GM12878 (cell line): ENCODE measurements at regions of chr6 and their contacts with region 1.

Region 1: DNA sequence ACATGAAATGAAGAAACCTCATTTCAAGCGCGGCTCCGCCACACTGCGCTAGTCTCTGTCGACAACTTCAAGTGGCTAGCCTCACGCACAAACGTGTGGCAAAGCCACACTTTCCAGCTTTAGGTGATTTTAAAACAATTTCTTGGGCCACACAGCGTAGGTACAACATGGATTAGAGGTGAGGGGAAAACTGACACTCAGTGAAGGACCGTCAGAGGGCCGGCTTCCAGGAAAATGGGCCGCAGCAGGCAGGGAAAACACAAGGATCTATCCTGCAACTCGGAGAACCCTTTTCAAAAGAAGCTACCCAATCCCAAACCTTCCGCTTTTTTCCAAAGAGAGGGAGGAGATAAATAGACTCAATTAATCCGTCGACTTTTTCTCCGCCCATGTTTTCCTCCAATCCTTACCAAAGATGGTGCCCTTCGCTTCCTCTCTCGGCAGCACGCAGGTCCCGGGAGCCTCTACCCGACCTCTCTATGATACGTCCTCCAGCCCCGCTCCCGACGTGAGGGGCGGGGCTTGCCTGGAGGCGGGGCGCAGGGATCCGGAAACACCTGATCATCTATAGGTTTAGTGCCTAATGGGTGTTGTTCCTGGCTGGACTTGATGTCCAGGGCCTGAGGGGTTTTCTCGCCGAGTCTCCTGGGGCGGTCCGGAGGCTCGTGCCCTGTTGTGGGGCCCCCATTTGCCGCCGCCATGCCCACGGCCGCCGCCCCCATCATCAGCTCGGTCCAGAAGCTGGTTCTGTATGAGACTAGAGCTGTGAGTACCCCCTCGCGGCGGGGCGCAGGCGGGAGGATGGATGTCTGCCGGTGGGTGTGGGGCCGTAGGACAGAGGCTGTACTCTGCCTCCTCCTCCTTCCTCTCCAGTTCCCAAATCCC is at the starts of genes AK9 and FIG4:
- DNase-seq: peak; percentile 61
- ATAC-seq: peak; percentile 97
- H3K4me3 ChIP-seq: peak within 1 kb of the TSS; percentile 91
- H3K27ac ChIP-seq: peak within 1 kb of the TSS; percentile 67
- H3K4me1 ChIP-seq: peaks cover 5% of the 10 kb centered on the region
- H3K27me3 ChIP-seq: no peaks in the 10 kb centered on the region
- CTCF ChIP-seq: peak in 2 of 3 experiments; percentile 16 to 29; a peak in 3 of 6 replicates
- EP300 ChIP-seq: no peak
- POLR2A ChIP-seq: peak; percentile 67
- RAD21 ChIP-seq: peak; percentile 17; the same call in 1 of the 2 replicates
- polyA plus RNA-seq, gene AK9: 4.0 to 5.8 TPM
- polyA plus RNA-seq, gene FIG4: 3.8 to 4.7 TPM

Region 2: GRCh38 chr6:109491207-109491938 is 199.6 kb before region 1 on chr6:
- CTCF ChIA-PET with region 1: no interaction called
- POLR2A ChIA-PET with region 1: interaction called, 10 read pairs
- RAD21 ChIA-PET with region 1: interaction called, 5 read pairs
- SMC1A ChIA-PET with region 1: interaction called, 5 read pairs
- in situ Hi-C with region 1: no loop called
- intact Hi-C with region 1: no loop called
- DNase-seq: no peak
- ATAC-seq: peak; percentile 89
- H3K4me3 ChIP-seq: no peak overlapping the region
- H3K27ac ChIP-seq: no peak overlapping the region
- H3K4me1 ChIP-seq: no peaks in the 10 kb centered on the region
- H3K27me3 ChIP-seq: no peaks in the 10 kb centered on the region; a peak in 1 of 4 replicates
- CTCF ChIP-seq: no peak
- EP300 ChIP-seq: no peak
- POLR2A ChIP-seq: no peak
- RAD21 ChIP-seq: no peak

Region 3: DNA sequence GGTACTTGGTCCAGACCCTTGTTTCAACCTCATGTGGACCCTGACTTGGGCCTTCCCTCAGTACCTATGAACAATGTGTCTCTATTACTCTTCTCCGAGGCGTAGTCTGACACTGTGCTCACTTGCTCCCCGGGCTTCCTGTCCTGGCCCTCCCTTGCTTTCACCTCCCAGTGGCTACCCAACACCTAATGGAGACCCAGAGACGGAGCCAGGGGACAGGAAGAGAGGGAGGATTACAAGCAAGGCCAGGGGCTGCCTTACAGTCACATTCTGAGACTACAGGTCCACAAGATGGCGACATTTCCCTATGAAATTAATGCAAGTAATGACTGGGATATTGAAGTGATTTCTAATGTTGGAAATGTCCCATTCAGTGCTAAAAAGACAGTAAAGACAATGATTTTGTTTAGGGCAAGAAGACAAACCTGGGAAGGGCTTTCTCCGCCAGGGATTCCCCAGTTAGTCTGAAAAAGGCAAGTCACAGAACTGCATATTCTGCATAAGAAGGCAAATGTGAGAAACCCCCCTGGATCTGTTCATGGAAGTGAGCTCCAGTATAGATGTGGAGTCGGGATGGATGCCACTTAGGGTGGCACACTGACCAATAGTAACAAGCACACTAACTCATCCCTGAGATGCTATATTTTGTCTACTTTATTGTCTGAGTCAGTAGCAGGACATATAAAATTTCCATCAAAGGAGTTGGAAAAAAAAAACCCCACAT is 163.9 kb before region 1 on chr6:
- CTCF ChIA-PET with region 1: interaction called, 5 read pairs
- POLR2A ChIA-PET with region 1: no interaction called
- RAD21 ChIA-PET with region 1: no interaction called
- SMC1A ChIA-PET with region 1: interaction called, 5 read pairs
- in situ Hi-C with region 1: loop called (anchors 10 kb)
- intact Hi-C with region 1: loop called (anchors 2 kb)
- DNase-seq: peak; percentile 28
- ATAC-seq: peak; percentile 97
- H3K4me3 ChIP-seq: no peak overlapping the region
- H3K27ac ChIP-seq: no peak overlapping the region
- H3K4me1 ChIP-seq: no peaks in the 10 kb centered on the region
- H3K27me3 ChIP-seq: no peaks in the 10 kb centered on the region
- CTCF ChIP-seq: peak; percentile 54 to 80 (median 67)
- EP300 ChIP-seq: no peak
- POLR2A ChIP-seq: no peak
- RAD21 ChIP-seq: peak; percentile 79

Region 4: DNA sequence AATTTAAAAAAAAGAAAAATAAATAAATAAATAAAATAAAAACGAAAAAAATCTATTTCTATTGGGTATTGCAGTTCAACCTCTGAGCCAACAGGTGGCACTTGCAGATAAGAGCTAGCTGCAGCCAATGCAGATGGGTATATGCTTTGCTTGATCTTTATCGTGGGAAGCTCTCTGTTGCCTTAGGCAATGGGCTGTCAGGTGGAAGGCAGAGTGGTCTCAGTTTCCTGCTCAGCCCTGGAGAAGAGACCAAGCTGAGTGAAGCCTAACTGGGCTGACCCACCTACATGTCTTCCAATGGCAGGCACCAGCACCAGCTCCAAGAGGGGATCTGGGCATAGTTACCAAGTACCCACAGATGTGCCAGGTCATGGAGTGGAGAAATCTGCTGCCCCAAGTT is 95.0 kb before region 1 on chr6:
- CTCF ChIA-PET with region 1: interaction called, 14 read pairs
- POLR2A ChIA-PET with region 1: no interaction called
- RAD21 ChIA-PET with region 1: no interaction called
- SMC1A ChIA-PET with region 1: interaction called, 4 read pairs
- in situ Hi-C with region 1: no loop called
- intact Hi-C with region 1: loop called (anchors 5 kb)
- DNase-seq: no peak
- ATAC-seq: peak; percentile 66
- H3K4me3 ChIP-seq: no peak overlapping the region
- H3K27ac ChIP-seq: no peak overlapping the region
- H3K4me1 ChIP-seq: no peaks in the 10 kb centered on the region
- H3K27me3 ChIP-seq: no peaks in the 10 kb centered on the region
- CTCF ChIP-seq: peak; percentile 37 to 45 (median 45); a peak in 5 of 6 replicates
- EP300 ChIP-seq: no peak
- POLR2A ChIP-seq: no peak
- RAD21 ChIP-seq: peak; percentile 84

Region 5: GRCh38 chr6:109939654-109940053 is 248.7 kb after region 1 on chr6:
- CTCF ChIA-PET with region 1: no interaction called
- POLR2A ChIA-PET with region 1: no interaction called
- RAD21 ChIA-PET with region 1: no interaction called
- SMC1A ChIA-PET with region 1: no interaction called
- in situ Hi-C with region 1: no loop called
- intact Hi-C with region 1: no loop called
- DNase-seq: no peak
- ATAC-seq: no peak
- H3K4me3 ChIP-seq: no peak overlapping the region
- H3K27ac ChIP-seq: no peak overlapping the region
- H3K4me1 ChIP-seq: no peaks in the 10 kb centered on the region
- H3K27me3 ChIP-seq: no peaks in the 10 kb centered on the region
- CTCF ChIP-seq: no peak
- EP300 ChIP-seq: no peak
- POLR2A ChIP-seq: no peak
- RAD21 ChIP-seq: no peak

Region 6: DNA sequence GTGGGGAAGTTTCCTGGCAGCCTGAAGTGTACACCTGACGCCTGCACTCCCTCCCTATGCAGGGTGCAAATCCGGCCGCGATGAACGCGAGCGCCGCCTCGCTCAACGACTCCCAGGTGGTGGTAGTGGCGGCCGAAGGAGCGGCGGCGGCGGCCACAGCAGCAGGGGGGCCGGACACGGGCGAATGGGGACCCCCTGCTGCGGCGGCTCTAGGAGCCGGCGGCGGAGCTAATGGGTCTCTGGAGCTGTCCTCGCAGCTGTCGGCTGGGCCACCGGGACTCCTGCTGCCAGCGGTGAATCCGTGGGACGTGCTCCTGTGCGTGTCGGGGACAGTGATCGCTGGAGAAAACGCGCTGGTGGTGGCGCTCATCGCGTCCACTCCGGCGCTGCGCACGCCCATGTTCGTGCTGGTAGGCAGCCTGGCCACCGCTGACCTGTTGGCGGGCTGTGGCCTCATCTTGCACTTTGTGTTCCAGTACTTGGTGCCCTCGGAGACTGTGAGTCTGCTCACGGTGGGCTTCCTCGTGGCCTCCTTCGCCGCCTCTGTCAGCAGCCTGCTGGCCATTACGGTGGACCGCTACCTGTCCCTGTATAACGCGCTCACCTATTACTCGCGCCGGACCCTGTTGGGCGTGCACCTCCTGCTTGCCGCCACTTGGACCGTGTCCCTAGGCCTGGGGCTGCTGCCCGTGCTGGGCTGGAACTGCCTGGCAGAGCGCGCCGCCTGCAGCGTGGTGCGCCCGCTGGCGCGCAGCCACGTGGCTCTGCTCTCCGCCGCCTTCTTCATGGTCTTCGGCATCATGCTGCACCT is 288.3 kb after region 1 on chr6:
- CTCF ChIA-PET with region 1: no interaction called
- POLR2A ChIA-PET with region 1: no interaction called
- RAD21 ChIA-PET with region 1: no interaction called
- SMC1A ChIA-PET with region 1: no interaction called
- in situ Hi-C with region 1: no loop called
- intact Hi-C with region 1: no loop called
- DNase-seq: no peak
- ATAC-seq: no peak
- H3K4me3 ChIP-seq: no peak overlapping the region
- H3K27ac ChIP-seq: no peak overlapping the region
- H3K4me1 ChIP-seq: no peaks in the 10 kb centered on the region
- H3K27me3 ChIP-seq: no peaks in the 10 kb centered on the region; a peak in 2 of 4 replicates
- CTCF ChIP-seq: no peak
- EP300 ChIP-seq: no peak
- POLR2A ChIP-seq: no peak
- RAD21 ChIP-seq: no peak

Region 7: GRCh38 chr6:110020888-110021287 is 329.9 kb after region 1 on chr6:
- CTCF ChIA-PET with region 1: no interaction called
- POLR2A ChIA-PET with region 1: no interaction called
- RAD21 ChIA-PET with region 1: no interaction called
- SMC1A ChIA-PET with region 1: no interaction called
- in situ Hi-C with region 1: no loop called
- intact Hi-C with region 1: no loop called
- DNase-seq: no peak
- ATAC-seq: peak; percentile 33; the same call in 1 of the 3 replicates
- H3K4me3 ChIP-seq: no peak overlapping the region
- H3K27ac ChIP-seq: no peak overlapping the region
- H3K4me1 ChIP-seq: no peaks in the 10 kb centered on the region; the same call in 1 of the 2 replicates
- H3K27me3 ChIP-seq: no peaks in the 10 kb centered on the region; a peak in 1 of 4 replicates
- CTCF ChIP-seq: no peak
- EP300 ChIP-seq: no peak
- POLR2A ChIP-seq: no peak
- RAD21 ChIP-seq: no peak